ENCODE measurements at regions of chr3 and their contacts with region 1.

Region 1: DNA sequence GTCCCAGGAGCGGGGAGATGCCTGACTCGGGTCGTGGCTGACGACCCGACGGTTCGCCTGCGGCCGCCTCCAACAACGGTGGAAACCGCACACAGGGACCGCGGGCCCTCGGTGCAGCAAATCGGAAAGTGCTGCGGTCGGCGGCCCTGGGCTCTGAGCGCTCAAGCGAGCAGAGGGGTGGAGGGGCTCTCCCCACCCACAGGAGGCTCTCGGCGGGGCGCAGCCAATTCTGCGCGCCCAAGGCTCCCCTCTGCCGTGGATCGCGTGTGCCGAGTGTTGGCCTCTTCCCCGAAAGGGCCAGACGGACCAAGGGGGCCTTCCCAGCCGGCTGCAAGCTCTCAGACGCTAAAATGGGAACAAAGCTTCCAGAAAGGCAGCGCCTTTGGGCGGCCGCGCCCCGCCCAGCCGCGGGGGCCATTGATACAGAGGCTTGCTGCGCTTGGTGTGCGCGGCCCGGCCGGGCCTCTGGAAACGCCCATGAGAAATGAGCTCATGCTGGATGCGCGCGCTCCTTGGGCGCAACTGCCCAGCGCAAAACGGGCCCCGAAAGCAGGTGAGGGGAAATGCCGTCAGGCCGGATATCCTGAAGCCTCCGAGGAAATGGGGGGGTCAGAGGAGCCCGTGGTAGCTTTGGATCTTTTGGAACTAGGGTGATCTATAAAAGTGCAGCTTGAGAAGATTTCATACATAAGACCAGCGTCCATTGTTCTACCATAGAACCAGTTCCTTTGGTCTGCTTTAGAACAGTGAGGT is 1.2 kb upstream of the GSK3B start:
- DNase-seq: peak; percentile 92
- H3K4me3 Mint-ChIP-seq: no peak overlapping the region
- H3K27ac Mint-ChIP-seq: no peak overlapping the region
- H3K4me1 Mint-ChIP-seq: peaks cover 18% of the 10 kb centered on the region
- H3K27me3 Mint-ChIP-seq: no peaks in the 10 kb centered on the region

Region 2: DNA sequence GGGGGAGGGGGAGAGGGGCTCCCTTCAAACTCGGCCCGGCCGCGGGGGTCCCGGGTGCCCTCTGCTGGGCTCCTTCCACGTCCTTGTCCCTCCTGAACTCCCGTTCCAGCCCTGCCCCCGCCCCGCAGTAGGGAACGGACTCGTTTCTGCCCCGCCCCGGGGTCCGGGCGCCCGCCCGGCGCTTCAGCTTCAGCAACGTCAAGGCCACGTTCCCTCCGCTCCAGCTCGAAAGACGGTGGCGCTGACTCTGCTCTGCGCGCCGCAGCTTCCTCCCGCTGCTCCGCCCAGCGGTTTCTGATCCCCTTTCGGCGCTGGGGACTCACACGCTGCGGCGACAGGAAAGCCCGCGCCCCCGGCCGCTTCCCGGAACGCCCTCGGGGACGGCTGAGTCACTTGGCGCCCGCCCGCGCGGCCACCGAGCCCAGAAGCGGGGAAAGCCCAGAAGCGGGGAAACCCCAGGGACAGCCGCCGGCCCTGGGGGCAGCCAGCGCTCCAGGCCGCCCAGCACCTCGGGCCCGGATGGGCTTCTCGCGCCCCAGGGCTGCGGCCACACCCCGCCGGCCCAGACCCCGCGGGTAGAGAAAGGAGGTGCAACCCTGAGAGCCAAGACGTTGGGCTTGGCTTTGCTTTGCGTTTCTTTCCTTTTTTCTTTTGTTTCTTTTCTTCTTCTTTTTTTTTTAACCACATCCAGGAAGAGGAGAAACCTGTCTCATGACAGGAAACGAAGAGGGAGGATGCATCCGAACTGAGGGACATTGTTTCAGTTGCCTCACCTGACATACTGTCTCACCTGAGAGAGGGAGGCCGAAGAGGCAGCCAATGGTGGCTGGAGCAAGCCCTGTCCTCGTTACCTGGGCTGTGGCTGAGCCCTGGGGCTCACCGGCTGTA is 772.3 kb before region 1 on chr3:
- CTCF ChIA-PET with region 1: no interaction called
- intact Hi-C with region 1: loop called (anchors 1 kb)
- DNase-seq: peak; percentile 96
- H3K4me3 Mint-ChIP-seq: peak overlapping the region; percentile 83
- H3K27ac Mint-ChIP-seq: peak overlapping the region; percentile 94
- H3K4me1 Mint-ChIP-seq: peaks cover 47% of the 10 kb centered on the region
- H3K27me3 Mint-ChIP-seq: no peaks in the 10 kb centered on the region

Region 3: GRCh38 chr3:119637679-119638525 is 457.5 kb before region 1 on chr3:
- CTCF ChIA-PET with region 1: no interaction called
- intact Hi-C with region 1: loop called (anchors 1 kb)
- DNase-seq: peak; percentile 19
- H3K4me3 Mint-ChIP-seq: no peak overlapping the region
- H3K27ac Mint-ChIP-seq: peak overlapping the region; percentile 91
- H3K4me1 Mint-ChIP-seq: peaks cover 36% of the 10 kb centered on the region
- H3K27me3 Mint-ChIP-seq: no peaks in the 10 kb centered on the region

Region 4: GRCh38 chr3:119891944-119892721 is 203.3 kb before region 1 on chr3:
- CTCF ChIA-PET with region 1: interaction called, 6 read pairs
- intact Hi-C with region 1: loop called (anchors 1 kb)
- DNase-seq: peak; percentile 59
- H3K4me3 Mint-ChIP-seq: no peak overlapping the region
- H3K27ac Mint-ChIP-seq: no peak overlapping the region
- H3K4me1 Mint-ChIP-seq: peaks cover 17% of the 10 kb centered on the region
- H3K27me3 Mint-ChIP-seq: no peaks in the 10 kb centered on the region

Region 5: GRCh38 chr3:120113128-120114116 is 18.0 kb after region 1 on chr3:
- CTCF ChIA-PET with region 1: no interaction called
- intact Hi-C with region 1: no loop called
- DNase-seq: no peak
- H3K4me3 Mint-ChIP-seq: no peak overlapping the region
- H3K27ac Mint-ChIP-seq: no peak overlapping the region
- H3K4me1 Mint-ChIP-seq: no peaks in the 10 kb centered on the region
- H3K27me3 Mint-ChIP-seq: no peaks in the 10 kb centered on the region

Region 6: GRCh38 chr3:120147072-120147871 is 51.9 kb after region 1 on chr3:
- CTCF ChIA-PET with region 1: interaction called, 7 read pairs
- intact Hi-C with region 1: loop called (anchors 1 kb)
- DNase-seq: peak; percentile 61
- H3K4me3 Mint-ChIP-seq: no peak overlapping the region
- H3K27ac Mint-ChIP-seq: no peak overlapping the region
- H3K4me1 Mint-ChIP-seq: peaks cover 25% of the 10 kb centered on the region
- H3K27me3 Mint-ChIP-seq: no peaks in the 10 kb centered on the region

Region 7: GRCh38 chr3:120214161-120214560 is 118.8 kb after region 1 on chr3:
- CTCF ChIA-PET with region 1: no interaction called
- intact Hi-C with region 1: no loop called
- DNase-seq: no peak
- H3K4me3 Mint-ChIP-seq: no peak overlapping the region
- H3K27ac Mint-ChIP-seq: no peak overlapping the region
- H3K4me1 Mint-ChIP-seq: no peaks in the 10 kb centered on the region
- H3K27me3 Mint-ChIP-seq: peaks cover 13% of the 10 kb centered on the region

Region 8: DNA sequence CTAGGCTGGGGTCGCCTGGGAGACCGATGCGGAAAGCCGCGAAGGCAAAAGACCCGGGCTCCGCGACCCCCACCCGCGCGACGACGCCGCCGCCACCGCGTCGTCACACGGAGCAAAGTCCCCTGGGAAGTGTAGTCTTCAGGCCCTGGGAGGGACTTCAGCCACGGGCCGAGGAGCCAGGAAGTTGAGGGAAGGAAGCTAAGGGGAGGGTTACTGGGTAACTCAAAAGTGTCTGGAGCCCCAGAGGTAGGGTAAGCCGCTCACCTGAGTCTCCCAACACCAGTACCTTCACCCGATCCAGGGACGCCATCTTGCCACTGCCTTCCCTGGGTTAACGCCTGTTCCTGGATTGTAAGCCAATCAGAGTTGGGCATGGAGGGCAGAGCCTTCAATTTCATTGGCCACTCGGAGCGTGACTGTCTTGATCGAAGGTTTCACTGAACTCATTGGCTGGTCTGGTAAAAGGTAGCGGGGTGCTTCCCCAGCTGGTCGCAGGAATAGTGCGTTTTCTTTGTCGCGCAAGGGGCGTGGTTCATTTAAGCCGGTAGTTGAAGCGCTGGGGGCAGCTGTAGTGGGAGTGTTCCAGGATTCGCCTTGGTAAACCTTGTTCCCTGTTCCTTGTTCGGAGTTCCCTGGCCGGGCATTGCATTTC is 646.9 kb after region 1 on chr3 and contains the starts of genes GTF2E1 and RABL3:
- CTCF ChIA-PET with region 1: no interaction called
- intact Hi-C with region 1: loop called (anchors 1 kb)
- DNase-seq: peak; percentile 98
- H3K4me3 Mint-ChIP-seq: peak within 1 kb of the TSS; percentile 90
- H3K27ac Mint-ChIP-seq: peak within 1 kb of the TSS; percentile 96
- H3K4me1 Mint-ChIP-seq: peaks cover 33% of the 10 kb centered on the region
- H3K27me3 Mint-ChIP-seq: no peaks in the 10 kb centered on the region
- total RNA-seq, gene GTF2E1: 13.2 TPM
- total RNA-seq, gene RABL3: 34.7 to 36.8 TPM

Measured in activated naive CD4-positive, alpha-beta T cell treated with anti-CD3 and anti-CD28 coated beads for 36 hours (primary cell).